Activated CD8-positive, alpha-beta memory T cell treated with anti-CD3 and anti-CD28 coated beads, Interleukin-2, amount 10 ng/mL, durations not matched to agents 7 days and 5 days (primary cell): ENCODE measurements at regions of chr9 and their contacts with region 1.

Region 1: GRCh38 chr9:21812946-21813568 is 10.6 kb downstream of the MTAP start:
- DNase-seq: peak; percentile 75
- ATAC-seq: peak; percentile 65
- H3K4me3 Mint-ChIP-seq: no peak overlapping the region
- H3K27ac Mint-ChIP-seq: peak overlapping the region; percentile 16
- H3K4me1 Mint-ChIP-seq: peaks cover 32% of the 10 kb centered on the region
- H3K27me3 Mint-ChIP-seq: no peaks in the 10 kb centered on the region

Region 2: GRCh38 chr9:21802195-21803000 is 10.7 kb before region 1 on chr9 and contains the start of gene MTAP:
- CTCF ChIA-PET with region 1: interaction called, 11 read pairs
- DNase-seq: peak; percentile 80
- ATAC-seq: peak; percentile 85
- H3K4me3 Mint-ChIP-seq: peak within 1 kb of the TSS; percentile 97
- H3K27ac Mint-ChIP-seq: peak within 1 kb of the TSS; percentile 97
- H3K4me1 Mint-ChIP-seq: peaks cover 37% of the 10 kb centered on the region
- H3K27me3 Mint-ChIP-seq: peaks cover 40% of the 10 kb centered on the region
- total RNA-seq, gene MTAP: 44.9 to 63.7 TPM

Region 3: DNA sequence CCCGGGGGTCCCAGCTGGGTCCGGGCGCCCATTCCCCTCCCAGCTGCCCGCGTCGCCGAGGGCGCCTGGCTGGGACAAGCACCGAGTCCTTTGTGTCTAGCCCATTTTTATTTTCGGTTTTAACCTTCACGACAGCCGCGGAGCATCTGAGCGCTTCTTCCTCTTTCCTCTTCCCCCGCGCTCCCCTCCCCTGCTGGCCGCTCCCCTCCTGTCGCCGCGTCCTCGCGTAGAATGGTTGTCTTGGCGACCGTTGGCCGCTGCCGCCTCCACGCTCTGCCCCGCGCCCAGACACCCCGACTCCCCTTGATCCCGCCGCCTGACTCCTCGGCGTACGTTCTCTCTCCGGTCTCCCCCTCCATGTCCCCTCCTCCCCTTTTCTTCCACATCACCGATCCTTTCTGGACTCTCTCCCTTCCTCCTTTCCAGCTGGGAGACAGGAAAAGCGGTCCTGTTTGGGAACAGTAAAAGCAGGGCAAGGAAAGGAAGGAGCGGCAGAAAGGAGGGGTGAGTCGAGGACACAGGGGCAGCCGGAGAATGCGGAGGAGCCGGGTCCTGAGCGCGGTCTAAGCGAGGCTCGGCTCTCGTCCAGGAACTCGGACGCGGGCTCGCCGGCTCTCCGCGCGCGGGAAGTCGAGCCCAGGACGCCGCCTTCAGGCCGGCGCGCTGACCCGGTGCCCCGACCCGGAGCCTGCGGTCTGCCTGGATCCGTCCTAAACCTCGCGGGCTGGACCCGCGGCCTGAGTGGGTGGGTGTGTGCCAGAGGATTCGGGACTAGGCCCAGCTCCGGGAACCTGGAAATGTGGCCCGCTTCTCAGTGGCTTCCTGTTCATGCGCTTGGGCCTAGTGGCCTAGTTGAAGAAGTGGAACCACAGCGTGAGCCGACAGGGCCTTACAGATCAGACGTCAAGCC is 182.4 kb after region 1 on chr9:
- CTCF ChIA-PET with region 1: interaction called, 10 read pairs
- DNase-seq: peak; percentile 92
- ATAC-seq: peak; percentile 83
- H3K4me3 Mint-ChIP-seq: peak overlapping the region; percentile 95
- H3K27ac Mint-ChIP-seq: peak overlapping the region; percentile 98
- H3K4me1 Mint-ChIP-seq: peaks cover 23% of the 10 kb centered on the region
- H3K27me3 Mint-ChIP-seq: peaks cover 26% of the 10 kb centered on the region

Region 4: GRCh38 chr9:22037954-22038690 is 225.1 kb after region 1 on chr9:
- CTCF ChIA-PET with region 1: interaction called, 86 read pairs
- DNase-seq: no peak
- ATAC-seq: no peak
- H3K4me3 Mint-ChIP-seq: no peak overlapping the region
- H3K27ac Mint-ChIP-seq: no peak overlapping the region
- H3K4me1 Mint-ChIP-seq: peaks cover 29% of the 10 kb centered on the region
- H3K27me3 Mint-ChIP-seq: peaks cover 22% of the 10 kb centered on the region

Region 5: GRCh38 chr9:22119537-22120158 is 306.6 kb after region 1 on chr9:
- CTCF ChIA-PET with region 1: interaction called, 30 read pairs
- DNase-seq: peak; percentile 43
- ATAC-seq: peak; percentile 93
- H3K4me3 Mint-ChIP-seq: no peak overlapping the region
- H3K27ac Mint-ChIP-seq: no peak overlapping the region
- H3K4me1 Mint-ChIP-seq: peaks cover 13% of the 10 kb centered on the region
- H3K27me3 Mint-ChIP-seq: peaks cover 66% of the 10 kb centered on the region

Region 6: GRCh38 chr9:22238809-22239684 is 426.0 kb after region 1 on chr9:
- CTCF ChIA-PET with region 1: interaction called, 23 read pairs
- DNase-seq: no peak
- ATAC-seq: peak; percentile 41
- H3K4me3 Mint-ChIP-seq: no peak overlapping the region
- H3K27ac Mint-ChIP-seq: no peak overlapping the region
- H3K4me1 Mint-ChIP-seq: peaks cover 32% of the 10 kb centered on the region
- H3K27me3 Mint-ChIP-seq: peaks cover 50% of the 10 kb centered on the region

Region 7: DNA sequence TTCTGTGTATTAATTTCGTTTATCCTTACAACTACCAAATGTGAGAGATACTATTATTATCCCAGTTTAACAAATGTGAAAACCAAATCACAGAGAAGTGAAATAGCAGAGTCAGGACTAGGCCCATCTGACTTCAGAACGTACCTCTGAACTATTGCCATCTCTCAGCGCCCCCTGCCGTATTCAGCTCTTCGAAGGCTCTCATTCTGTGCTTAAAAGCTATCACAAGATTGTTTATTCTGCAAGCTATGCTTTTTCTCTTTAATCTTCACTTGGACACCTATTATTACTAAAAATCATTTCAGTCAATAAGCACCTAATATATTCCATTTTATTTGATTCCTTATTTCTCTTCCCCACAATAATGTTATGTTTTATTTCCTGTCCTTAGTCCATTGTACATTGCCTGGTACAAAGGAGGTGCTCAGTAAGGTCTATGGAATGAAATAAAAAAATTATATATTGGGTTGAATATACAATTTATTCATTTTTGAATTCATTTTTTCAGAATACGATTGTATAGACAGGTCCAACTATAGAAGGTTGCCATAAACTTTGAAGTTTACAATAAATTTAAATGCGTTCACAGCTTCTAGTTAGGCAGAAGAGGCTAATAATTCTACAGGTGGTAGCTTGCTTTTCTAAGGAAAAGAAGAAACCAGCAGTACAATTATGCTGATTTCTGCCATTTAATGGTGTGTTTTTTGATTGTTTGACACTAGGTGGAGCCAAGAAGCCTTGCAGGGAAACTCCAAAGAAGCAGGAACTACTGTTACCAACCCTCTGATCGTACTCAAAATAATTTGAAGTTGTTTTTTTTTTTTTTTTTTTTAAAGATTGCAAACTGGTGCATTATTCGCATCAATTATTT is 431.3 kb after region 1 on chr9:
- CTCF ChIA-PET with region 1: interaction called, 23 read pairs
- DNase-seq: peak; percentile 55
- ATAC-seq: peak; percentile 59
- H3K4me3 Mint-ChIP-seq: no peak overlapping the region
- H3K27ac Mint-ChIP-seq: no peak overlapping the region
- H3K4me1 Mint-ChIP-seq: peaks cover 25% of the 10 kb centered on the region
- H3K27me3 Mint-ChIP-seq: peaks cover 55% of the 10 kb centered on the region